ENCODE measurements at regions of chr1 and their contacts with region 1.

Region 1: DNA sequence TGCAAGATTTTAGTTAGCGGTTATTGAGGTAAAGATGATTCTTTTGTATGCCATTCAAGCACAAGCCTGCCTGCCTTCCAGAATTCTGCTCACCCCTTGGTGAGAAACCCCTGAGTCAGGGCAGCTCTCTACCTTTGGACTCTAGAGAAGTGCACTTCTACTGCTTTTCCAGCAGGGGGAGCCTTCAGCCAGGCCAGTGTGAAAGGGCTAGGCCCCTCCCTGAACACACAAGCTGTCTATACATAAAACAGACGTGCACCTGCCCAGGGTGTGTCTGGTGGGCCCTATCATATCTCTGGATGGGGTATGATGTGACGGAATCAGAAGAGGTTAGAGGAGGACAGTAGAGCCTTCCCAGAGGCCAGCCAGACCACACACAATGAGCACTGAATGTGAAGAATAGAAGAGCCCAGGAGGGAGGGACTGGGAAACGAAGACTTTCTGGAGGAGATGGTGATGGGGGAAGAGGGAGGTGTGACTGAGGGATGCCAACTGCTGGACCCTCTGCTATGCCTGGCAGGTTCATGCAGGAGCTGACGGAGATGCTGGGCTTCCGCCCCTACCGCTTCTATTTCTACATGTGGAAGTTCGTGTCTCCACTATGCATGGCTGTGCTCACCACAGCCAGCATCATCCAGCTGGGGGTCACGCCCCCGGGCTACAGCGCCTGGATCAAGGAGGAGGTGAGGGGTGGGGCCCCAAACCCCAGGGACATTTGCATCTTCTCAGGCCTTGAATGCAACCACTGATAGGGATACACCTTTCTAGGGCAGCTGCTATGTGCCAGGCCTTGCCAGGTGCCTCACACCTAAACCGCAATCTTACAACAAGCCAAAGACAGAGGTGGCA is 13.0 kb upstream of the KCNC4 start:
- DNase-seq: peak; percentile 54
- H3K4me3 Mint-ChIP-seq: no peak overlapping the region
- H3K27ac Mint-ChIP-seq: no peak overlapping the region
- H3K4me1 Mint-ChIP-seq: no peaks in the 10 kb centered on the region
- H3K27me3 Mint-ChIP-seq: no peaks in the 10 kb centered on the region
- CTCF ChIP-seq: peak; percentile 89

Region 2: DNA sequence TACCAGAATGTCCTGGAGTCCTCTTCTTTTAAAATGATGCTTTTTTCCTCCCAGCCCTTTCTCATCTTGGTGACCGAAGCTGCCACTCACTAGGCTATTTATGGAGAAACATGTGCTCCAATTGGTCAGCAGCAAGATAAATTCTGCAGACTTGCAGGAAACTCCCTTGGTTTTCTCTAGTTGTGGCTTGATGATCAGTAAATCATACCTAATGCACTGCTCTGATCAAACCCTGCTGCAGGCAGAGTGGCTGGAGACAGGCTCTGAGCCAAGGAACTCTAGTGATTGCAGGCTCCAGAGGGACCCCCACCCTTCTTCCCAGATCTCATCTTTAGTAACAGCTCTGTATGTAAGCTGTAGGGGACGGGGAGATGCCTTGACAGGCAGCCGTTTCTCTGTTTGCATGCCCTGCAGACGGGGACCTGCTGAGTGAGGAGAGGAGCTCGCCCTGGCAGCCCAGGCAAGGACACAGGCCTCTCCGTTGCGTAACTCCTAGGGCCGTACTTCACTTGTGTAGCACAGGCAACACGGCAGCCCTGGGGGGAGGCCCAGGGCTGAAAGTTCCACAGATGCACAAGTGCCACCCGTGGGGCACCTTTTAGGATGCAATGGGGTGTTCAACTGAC is 32.3 kb before region 1 on chr1:
- CTCF ChIA-PET with region 1: interaction called, 12 read pairs
- POLR2A ChIA-PET with region 1: no interaction called
- intact Hi-C with region 1: no loop called
- DNase-seq: no peak
- H3K4me3 Mint-ChIP-seq: no peak overlapping the region
- H3K27ac Mint-ChIP-seq: no peak overlapping the region
- H3K4me1 Mint-ChIP-seq: no peaks in the 10 kb centered on the region
- H3K27me3 Mint-ChIP-seq: peaks cover 25% of the 10 kb centered on the region
- CTCF ChIP-seq: no peak

Region 3: GRCh38 chr1:110292031-110292741 is 95.0 kb after region 1 on chr1:
- CTCF ChIA-PET with region 1: interaction called, 1,128 read pairs
- POLR2A ChIA-PET with region 1: no interaction called
- intact Hi-C with region 1: no loop called
- DNase-seq: peak; percentile 36
- H3K4me3 Mint-ChIP-seq: no peak overlapping the region
- H3K27ac Mint-ChIP-seq: no peak overlapping the region
- H3K4me1 Mint-ChIP-seq: peaks cover 19% of the 10 kb centered on the region
- H3K27me3 Mint-ChIP-seq: no peaks in the 10 kb centered on the region
- CTCF ChIP-seq: no peak